Upper lobe of right lung (tissue), 1 donor: ENCODE measurements at regions of chr7 and their contacts with region 1.

Region 1: DNA sequence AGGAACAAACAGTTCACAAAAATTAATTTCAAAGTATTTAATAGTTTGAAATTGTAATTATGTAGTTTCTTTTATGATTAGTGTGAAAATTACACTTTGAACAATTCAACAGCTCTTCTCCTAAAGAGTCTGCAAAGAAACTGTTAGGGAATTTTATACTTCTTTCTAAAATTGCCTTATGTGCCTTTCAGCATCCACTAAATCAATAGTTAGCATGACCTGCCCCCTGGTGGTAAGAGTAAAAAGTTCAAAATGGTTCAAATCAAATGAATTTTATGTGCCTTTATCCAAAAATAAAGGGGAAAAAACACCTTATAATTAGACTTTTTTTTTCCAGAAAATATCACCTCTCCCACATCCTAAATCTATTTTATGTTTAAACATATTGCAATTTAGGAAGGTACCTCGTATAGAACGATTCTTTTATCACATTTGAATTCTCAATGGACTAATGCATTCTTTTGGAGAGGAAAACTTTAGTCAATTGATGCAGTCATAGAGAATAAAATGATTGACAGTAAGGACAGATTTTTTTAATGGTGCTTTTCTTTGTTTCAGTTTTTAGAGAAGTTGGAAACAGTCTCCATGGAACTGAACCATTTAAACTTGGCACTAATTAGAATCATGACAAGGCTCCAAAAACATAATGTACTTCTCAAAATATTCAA is 163.7 kb downstream of the SEMA3D start:
- DNase-seq: no peak
- ATAC-seq: no peak
- H3K4me3 ChIP-seq: no peak overlapping the region
- H3K27ac ChIP-seq: no peak overlapping the region
- H3K4me1 ChIP-seq: no peaks in the 10 kb centered on the region
- H3K27me3 ChIP-seq: no peaks in the 10 kb centered on the region
- CTCF ChIP-seq: peak; percentile 69

Region 2: GRCh38 chr7:83976295-83976694 is 1046.9 kb before region 1 on chr7:
- intact Hi-C with region 1: loop called (anchors 10 kb)
- DNase-seq: no peak
- ATAC-seq: peak; percentile 64
- H3K4me3 ChIP-seq: no peak overlapping the region
- H3K27ac ChIP-seq: no peak overlapping the region
- H3K4me1 ChIP-seq: no peaks in the 10 kb centered on the region
- H3K27me3 ChIP-seq: no peaks in the 10 kb centered on the region
- CTCF ChIP-seq: peak; percentile 76